ENCODE measurements at regions of chr9 and their contacts with region 1.

Region 1: GRCh38 chr9:25442526-25442925 is 235.7 kb downstream of the TUSC1 start:
- H3K4me3 Mint-ChIP-seq: no peak overlapping the region
- H3K27ac Mint-ChIP-seq: no peak overlapping the region
- H3K4me1 Mint-ChIP-seq: no peaks in the 10 kb centered on the region
- H3K27me3 Mint-ChIP-seq: no peaks in the 10 kb centered on the region

Region 2: DNA sequence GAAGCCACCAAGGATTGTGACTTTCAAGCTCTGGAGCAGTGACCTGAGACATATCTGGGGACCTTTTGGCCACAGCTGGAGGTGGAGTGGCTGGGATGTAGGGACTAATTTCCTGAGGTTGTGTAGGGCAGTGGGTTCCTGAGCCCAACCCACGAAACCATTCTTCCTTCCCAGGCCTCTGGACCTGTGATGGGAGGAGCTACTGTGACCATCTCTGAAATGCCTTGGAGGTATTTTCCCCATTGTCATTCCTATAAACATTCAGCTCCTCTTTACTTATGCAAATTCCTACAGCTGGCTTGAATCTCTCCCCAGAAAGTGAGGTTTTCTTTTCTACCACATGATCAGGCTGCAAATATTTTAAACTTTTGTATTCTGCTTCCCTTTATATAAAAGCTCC is 63.1 kb after region 1 on chr9:
- intact Hi-C with region 1: loop called (anchors 10 kb)
- H3K4me3 Mint-ChIP-seq: no peak overlapping the region
- H3K27ac Mint-ChIP-seq: no peak overlapping the region
- H3K4me1 Mint-ChIP-seq: no peaks in the 10 kb centered on the region
- H3K27me3 Mint-ChIP-seq: no peaks in the 10 kb centered on the region

Measured in dendritic cell treated with granulocyte-macrophage colony-stimulating factor and Interleukin-4, amounts not matched to agents 40 ng/mL and 50 ng/mL, for 4 days (primary cell).